ENCODE measurements at regions of chr1 and their contacts with region 1.

Region 1: GRCh38 chr1:110355321-110355720 is 16.1 kb downstream of the RBM15 start:
- DNase-seq: no peak
- ATAC-seq: no peak
- H3K4me3 ChIP-seq: no peak overlapping the region
- H3K4me3 Mint-ChIP-seq: no peak overlapping the region
- H3K27ac ChIP-seq: no peak overlapping the region
- H3K27ac Mint-ChIP-seq: no peak overlapping the region
- H3K4me1 ChIP-seq: peaks cover 0 to 8% of the 10 kb centered on the region in 2 experiments
- H3K4me1 Mint-ChIP-seq: peaks cover 31 to 48% (median 44%) of the 10 kb centered on the region in 3 donors
- H3K27me3 ChIP-seq: no peaks in the 10 kb centered on the region
- H3K27me3 Mint-ChIP-seq: no peaks in the 10 kb centered on the region

Region 2: GRCh38 chr1:110489973-110490542 is 134.7 kb after region 1 on chr1:
- CTCF ChIA-PET with region 1: no interaction called
- POLR2A ChIA-PET with region 1: interaction called in 1 of 2 experiments, 10 read pairs
- DNase-seq: no peak
- ATAC-seq: no peak
- H3K4me3 ChIP-seq: no peak overlapping the region
- H3K4me3 Mint-ChIP-seq: no peak overlapping the region
- H3K27ac ChIP-seq: no peak overlapping the region
- H3K27ac Mint-ChIP-seq: no peak overlapping the region
- H3K4me1 ChIP-seq: peaks cover 0 to 5% of the 10 kb centered on the region in 2 experiments
- H3K4me1 Mint-ChIP-seq: no peaks in the 10 kb centered on the region
- H3K27me3 ChIP-seq: peaks cover 0 to 15% of the 10 kb centered on the region in 2 experiments
- H3K27me3 Mint-ChIP-seq: peaks cover 14 to 15% of the 10 kb centered on the region in 2 donors